Activated T-helper 1 cell treated with anti-CD3 and anti-CD28 coated beads, Interleukin-12 subunit alpha, Interleukin-12 subunit beta, Interleukin-2, Interleukin-4 antibody, amounts not matched to agents 30 ng/mL and 10 ng/mL and 1 ng/mL, durations not matched to agents 14 hours and 24 hours and 36 hours (primary cell): ENCODE measurements at regions of chr15 and their contacts with region 1.

Region 1: DNA sequence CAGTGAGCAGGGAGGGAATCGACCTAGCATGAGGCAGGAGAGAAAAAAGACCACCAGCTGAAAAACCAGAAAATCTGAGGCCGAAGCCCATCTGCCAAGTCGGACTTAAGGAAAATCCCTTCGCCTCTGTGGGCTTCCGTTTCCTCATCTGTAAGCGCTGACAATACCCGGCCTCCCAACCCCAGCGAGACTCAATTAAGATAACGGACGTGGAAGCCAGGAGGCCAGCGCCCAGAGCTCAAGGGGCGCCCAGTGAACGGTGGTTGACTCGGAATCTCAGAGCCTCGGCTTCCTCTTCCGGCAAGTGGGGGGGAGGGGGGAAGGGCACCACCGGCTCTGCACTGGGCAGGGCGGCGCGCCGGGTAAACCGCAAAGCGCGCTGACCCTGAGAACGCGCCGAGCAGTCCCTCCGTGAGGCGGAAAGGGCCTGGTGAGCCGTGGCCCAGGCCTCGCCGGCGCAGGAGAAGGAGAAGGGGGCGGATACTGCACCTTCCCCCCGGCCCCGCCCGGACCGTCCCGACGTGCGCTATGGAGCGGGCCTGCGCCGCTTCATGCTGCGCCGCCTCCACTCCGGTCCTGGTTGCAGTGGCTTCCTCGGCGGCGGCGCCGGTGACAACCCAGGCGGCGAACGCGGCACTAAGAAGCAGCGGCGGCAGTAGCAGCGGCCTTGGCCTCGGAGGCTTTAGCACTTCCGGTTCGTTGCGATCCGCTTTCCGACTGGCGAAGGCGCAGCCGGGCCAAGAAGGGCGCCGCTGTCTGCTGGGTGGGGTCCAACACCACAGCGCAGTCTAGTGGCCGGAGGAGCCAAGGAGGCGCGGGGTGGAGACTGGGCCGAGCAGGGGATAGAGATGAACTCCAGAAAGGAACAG is at the start of gene DPP8:
- DNase-seq: peak; percentile 92
- H3K4me3 Mint-ChIP-seq: peak within 1 kb of the TSS; percentile 90
- H3K27ac Mint-ChIP-seq: peak within 1 kb of the TSS; percentile 90
- H3K4me1 Mint-ChIP-seq: peaks cover 32% of the 10 kb centered on the region
- H3K27me3 Mint-ChIP-seq: no peaks in the 10 kb centered on the region
- total RNA-seq, gene DPP8: 34.8 and 35.6 TPM in 2 replicates

Region 2: DNA sequence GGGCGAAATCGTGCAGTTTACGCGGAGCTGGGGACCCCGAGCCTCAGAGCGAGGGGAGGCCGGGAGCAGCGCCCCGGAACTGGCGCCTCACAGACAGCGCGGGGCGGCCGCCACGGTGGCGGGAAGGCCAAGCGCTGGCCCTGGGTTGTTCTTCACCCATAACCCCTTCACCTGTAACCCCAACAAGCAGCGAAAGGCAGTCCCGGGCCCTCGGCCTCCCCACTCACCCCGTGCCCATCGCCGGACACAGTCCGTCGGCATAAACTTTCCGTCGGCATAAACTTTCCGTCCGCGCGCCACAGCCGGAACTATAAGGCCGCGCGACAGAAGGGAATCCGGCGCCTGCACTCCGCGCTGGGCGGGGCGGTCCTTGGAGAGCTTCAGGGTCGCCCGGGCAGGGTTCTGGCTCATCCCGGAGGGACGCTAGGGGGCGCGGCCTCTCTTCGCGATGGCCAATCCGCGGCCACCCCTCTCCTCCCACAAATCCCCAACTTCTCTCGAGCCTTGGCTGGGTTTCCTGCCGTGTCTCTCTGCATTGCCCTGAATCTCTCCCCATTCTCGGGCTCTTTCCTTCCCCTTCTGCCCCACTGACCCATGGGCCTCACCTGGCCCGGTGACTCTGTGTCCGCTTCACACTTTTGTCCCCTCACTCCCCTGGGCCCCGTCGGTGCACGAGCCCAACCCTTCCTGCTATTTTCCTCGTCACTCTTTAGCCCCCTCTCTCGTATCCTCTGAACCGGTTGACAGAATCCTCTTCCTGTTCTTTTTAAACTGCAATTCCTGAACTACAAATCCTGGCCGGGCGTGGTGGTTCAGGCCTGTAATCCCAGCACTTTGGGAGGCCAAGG is 93.9 kb after region 1 on chr15 and contains the start of gene INTS14:
- intact Hi-C with region 1: loop called (anchors 1 kb)
- DNase-seq: peak; percentile 89
- H3K4me3 Mint-ChIP-seq: peak within 1 kb of the TSS; percentile 90
- H3K27ac Mint-ChIP-seq: peak within 1 kb of the TSS; percentile 96
- H3K4me1 Mint-ChIP-seq: peaks cover 36% of the 10 kb centered on the region
- H3K27me3 Mint-ChIP-seq: no peaks in the 10 kb centered on the region
- total RNA-seq, gene INTS14: 47.4 and 53.3 TPM in 2 replicates

Region 3: GRCh38 chr15:65916664-65917406 is 399.6 kb after region 1 on chr15:
- intact Hi-C with region 1: no loop called
- DNase-seq: peak; percentile 71
- H3K4me3 Mint-ChIP-seq: peak overlapping the region; percentile 37
- H3K27ac Mint-ChIP-seq: peak overlapping the region; percentile 83
- H3K4me1 Mint-ChIP-seq: peaks cover 55% of the 10 kb centered on the region
- H3K27me3 Mint-ChIP-seq: no peaks in the 10 kb centered on the region